Activated naive CD4-positive, alpha-beta T cell treated with anti-CD3 and anti-CD28 coated beads for 36 hours (primary cell): ENCODE measurements at regions of chr3 and their contacts with region 1.

Region 1: DNA sequence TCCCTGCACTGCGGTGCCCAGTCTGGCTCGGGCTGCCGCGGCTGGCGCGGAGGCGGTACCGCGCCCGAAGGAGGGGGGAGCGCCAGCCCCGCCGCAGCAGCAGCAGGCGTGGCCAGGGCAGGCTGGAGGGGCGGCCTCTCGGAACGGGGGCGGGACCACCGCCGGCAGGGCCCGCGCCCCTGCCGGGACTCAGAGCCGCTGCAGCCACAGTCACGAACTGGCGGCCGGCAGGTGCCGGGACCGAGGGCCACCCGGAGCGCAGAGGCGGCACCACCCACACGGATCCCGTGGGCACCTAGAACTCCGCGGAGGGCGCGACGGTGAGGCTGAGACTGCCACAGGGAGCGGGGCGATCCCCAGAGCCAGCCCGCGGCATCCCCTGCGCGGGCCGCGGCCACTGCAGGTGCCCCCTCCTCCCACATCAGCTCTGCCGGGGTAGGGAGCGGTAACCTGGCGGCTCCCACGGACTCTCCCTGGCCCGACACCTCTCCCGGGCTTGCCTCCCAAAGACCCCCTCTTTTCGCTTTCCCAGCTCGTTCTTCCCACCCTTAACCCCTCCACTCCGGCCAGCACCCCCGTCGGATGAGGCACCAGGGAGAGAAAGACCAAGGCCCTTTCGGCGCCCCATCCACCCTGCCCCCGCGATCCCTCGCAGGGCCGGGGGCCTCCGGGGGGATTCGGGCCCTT is at the start of gene VWA5B2:
- DNase-seq: peak; percentile 41
- H3K4me3 Mint-ChIP-seq: peak within 1 kb of the TSS; percentile 52
- H3K27ac Mint-ChIP-seq: no peak within 1 kb of the TSS
- H3K4me1 Mint-ChIP-seq: peaks cover 11% of the 10 kb centered on the region
- H3K27me3 Mint-ChIP-seq: peaks cover 50% of the 10 kb centered on the region
- total RNA-seq, gene VWA5B2: not detected

Region 2: DNA sequence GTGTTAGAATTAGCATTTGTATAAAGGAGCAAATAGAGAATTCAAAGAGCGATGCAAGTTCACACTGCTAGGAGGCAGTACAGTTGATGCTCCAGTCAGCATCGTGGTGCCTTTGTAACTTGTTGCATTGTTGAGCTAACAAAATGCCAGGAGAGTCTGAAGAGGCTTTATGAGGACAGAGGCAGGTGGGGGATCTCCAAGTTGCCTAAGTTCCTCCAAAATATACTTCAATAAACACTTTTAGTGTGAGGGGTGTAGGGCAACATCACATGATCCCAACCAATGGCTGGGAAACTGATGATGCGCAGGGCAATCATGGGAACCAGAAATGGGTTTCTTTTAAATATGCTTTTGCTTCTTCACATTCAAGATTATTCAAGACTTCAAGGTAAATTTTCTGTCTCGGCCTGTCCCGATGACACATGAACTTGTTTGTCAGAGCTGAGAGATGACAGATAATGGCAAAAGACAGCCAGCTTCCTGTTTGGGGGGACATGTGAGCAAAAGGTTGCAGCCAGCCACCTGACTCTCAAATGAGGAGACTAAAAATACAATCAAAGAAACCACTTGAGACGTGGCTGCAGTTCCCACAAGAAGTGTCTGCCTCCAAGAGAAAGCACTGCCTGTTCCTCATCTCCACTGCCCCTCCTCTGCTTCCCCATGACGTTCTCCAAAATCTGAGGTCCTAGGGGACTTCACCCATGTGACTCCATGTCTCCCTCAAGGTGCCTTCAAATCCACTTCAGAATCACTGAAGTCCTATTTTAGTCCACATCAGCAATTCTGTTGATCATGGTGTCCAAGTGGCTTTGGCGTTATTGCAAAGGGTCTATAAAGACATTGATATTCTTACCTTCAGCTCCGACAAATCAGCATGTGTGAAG is 713.3 kb before region 1 on chr3:
- CTCF ChIA-PET with region 1: no interaction called
- intact Hi-C with region 1: no loop called
- DNase-seq: peak; percentile 80
- H3K4me3 Mint-ChIP-seq: peak overlapping the region; percentile 17
- H3K27ac Mint-ChIP-seq: peak overlapping the region; percentile 90
- H3K4me1 Mint-ChIP-seq: peaks cover 81% of the 10 kb centered on the region
- H3K27me3 Mint-ChIP-seq: no peaks in the 10 kb centered on the region

Region 3: GRCh38 chr3:184185461-184186308 is 43.9 kb before region 1 on chr3 and contains the start of gene ABCF3:
- CTCF ChIA-PET with region 1: interaction called, 13 read pairs
- intact Hi-C with region 1: no loop called
- DNase-seq: peak; percentile 99
- H3K4me3 Mint-ChIP-seq: peak within 1 kb of the TSS; percentile 94
- H3K27ac Mint-ChIP-seq: peak within 1 kb of the TSS; percentile 92
- H3K4me1 Mint-ChIP-seq: peaks cover 28% of the 10 kb centered on the region
- H3K27me3 Mint-ChIP-seq: no peaks in the 10 kb centered on the region
- total RNA-seq, gene ABCF3: 38.5 to 39.1 TPM

Region 4: DNA sequence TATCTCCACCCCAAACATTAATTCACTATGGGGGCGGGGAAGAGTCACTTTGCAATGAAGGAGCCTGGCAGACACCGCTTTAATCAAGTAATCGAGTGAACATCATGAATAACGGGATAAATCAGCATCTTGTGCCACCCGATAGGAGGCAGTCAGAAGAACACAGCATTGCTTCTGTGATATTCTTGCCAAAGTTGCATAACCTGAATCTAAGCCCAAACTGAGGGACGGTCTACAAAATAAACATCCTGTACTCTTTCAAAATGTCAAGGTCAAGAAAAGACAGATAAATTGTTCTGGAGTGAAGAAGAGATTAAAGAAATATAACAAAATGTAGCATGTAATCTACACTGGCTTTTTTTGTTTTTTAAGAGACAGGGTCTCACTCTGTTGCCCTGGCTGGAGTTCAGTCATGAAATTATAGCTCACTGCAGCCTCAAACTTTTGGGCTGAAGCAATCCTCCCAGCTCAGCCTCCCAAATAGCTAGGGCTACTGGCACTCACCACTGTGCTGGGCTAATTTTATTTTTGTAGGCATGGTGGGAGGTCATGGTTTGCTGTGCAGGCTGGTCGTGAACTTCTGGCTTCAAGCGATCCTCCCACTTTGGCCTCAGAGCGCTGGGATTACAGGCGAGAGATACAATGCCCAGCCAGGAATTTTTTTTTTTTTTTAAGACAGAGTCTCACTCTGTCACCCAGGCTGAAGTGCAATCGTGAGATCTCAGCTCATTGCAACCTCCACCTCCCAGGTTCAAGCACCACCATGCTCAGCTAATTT is 20.2 kb before region 1 on chr3:
- CTCF ChIA-PET with region 1: interaction called, 14 read pairs
- intact Hi-C with region 1: no loop called
- DNase-seq: no peak
- H3K4me3 Mint-ChIP-seq: no peak overlapping the region
- H3K27ac Mint-ChIP-seq: no peak overlapping the region
- H3K4me1 Mint-ChIP-seq: no peaks in the 10 kb centered on the region
- H3K27me3 Mint-ChIP-seq: peaks cover 9% of the 10 kb centered on the region

Region 5: DNA sequence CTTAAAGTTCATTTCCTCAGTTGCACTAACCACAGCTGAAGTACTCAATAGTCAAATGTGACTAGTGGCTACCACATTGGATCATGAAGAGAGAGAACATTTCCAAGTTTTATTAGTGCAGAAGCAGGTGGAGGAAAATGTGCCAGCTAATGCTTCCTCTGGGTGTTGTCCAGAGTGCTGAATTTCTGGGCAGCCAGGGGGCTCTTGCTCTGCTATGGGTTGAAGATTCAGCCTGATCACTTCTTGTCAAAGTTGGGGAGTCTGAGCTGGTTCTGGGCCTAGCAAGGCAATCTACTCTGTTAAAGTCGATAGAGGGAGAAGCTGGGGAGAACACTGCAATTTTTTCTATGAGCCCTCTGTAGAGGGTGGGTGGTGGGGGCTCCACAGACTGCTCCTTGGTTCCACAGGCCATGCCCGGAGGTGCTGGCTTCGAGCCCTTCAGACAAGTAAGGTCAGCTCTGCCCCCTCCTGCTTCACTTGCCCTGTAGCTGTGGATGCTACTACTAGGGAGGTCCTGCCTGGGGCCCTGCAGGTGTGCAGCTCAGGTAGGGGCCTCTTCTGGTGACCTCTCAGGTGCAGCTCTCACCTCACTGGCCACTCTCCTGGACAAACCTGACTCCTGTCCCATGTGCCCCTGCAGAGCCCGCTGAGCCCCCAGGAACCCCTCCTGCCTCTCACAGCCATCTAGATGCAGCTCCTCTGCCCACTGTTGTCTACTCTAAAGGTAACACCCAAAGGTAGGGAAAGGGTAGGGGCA is 11.0 kb after region 1 on chr3:
- CTCF ChIA-PET with region 1: interaction called, 48 read pairs
- intact Hi-C with region 1: no loop called
- DNase-seq: no peak
- H3K4me3 Mint-ChIP-seq: no peak overlapping the region
- H3K27ac Mint-ChIP-seq: no peak overlapping the region
- H3K4me1 Mint-ChIP-seq: peaks cover 2% of the 10 kb centered on the region
- H3K27me3 Mint-ChIP-seq: no peaks in the 10 kb centered on the region

Region 6: DNA sequence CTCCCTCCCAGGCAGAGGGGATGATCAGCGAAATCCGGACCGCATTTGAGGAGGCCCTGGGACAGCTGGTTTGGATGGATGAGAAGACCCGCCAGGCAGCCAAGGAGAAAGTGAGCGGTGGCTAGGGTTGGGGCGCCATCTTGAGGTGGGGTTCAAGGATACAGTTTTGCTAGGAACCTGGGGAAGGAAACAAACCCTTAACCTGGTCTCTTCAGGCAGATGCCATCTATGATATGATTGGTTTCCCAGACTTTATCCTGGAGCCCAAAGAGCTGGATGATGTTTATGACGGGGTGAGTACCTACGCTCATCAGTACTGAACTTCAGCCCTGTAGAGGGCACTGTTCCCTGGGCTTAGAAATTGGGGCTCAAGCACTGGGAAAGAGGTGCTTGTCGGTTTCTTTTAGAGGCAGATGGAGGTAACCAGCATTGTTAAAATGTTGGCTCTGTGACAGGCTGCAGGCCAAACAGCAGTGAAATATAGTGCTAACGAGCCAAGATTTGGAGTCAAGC is 59.9 kb after region 1 on chr3:
- CTCF ChIA-PET with region 1: interaction called, 34 read pairs
- intact Hi-C with region 1: loop called (anchors 1 kb)
- DNase-seq: peak; percentile 79
- H3K4me3 Mint-ChIP-seq: no peak overlapping the region
- H3K27ac Mint-ChIP-seq: no peak overlapping the region
- H3K4me1 Mint-ChIP-seq: no peaks in the 10 kb centered on the region
- H3K27me3 Mint-ChIP-seq: peaks cover 4% of the 10 kb centered on the region

Region 7: DNA sequence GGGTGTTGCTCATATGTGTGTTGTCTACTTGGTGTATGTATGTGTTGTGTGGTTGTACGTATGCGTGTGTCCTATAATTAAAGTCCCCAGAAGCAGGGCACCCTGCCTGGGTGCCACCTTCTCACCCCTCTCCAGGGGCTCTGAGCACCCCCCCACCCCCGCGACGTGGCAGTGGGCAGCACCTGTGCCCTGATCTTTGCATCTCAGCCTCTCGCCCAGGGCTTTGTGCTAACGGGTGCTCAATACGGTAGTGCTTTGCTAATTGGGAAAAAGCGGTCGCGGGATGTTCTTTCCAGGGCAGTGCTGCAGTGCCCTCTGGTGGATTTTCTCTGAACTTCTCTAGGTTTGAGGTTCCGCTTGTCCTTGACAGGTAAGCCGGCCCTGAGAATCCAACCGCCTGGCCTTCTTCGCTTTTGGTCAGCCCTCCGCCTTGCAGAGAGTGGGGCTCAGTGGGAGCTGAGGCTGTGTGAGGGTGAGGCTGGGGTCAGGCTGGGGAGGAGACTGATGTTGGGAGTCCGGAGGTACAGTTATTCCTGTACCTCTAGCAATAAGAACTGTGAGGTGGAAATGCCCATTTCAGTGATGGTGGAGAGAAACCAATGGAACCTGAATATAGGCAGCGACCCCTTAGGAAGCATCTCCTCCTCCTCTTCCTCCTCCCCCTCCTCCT is 314.4 kb after region 1 on chr3:
- CTCF ChIA-PET with region 1: interaction called, 4 read pairs
- intact Hi-C with region 1: loop called (anchors 10 kb)
- DNase-seq: peak; percentile 89
- H3K4me3 Mint-ChIP-seq: no peak overlapping the region
- H3K27ac Mint-ChIP-seq: no peak overlapping the region
- H3K4me1 Mint-ChIP-seq: peaks cover 8% of the 10 kb centered on the region
- H3K27me3 Mint-ChIP-seq: no peaks in the 10 kb centered on the region